ENCODE measurements at regions of chr10 and their contacts with region 1.

Region 1: DNA sequence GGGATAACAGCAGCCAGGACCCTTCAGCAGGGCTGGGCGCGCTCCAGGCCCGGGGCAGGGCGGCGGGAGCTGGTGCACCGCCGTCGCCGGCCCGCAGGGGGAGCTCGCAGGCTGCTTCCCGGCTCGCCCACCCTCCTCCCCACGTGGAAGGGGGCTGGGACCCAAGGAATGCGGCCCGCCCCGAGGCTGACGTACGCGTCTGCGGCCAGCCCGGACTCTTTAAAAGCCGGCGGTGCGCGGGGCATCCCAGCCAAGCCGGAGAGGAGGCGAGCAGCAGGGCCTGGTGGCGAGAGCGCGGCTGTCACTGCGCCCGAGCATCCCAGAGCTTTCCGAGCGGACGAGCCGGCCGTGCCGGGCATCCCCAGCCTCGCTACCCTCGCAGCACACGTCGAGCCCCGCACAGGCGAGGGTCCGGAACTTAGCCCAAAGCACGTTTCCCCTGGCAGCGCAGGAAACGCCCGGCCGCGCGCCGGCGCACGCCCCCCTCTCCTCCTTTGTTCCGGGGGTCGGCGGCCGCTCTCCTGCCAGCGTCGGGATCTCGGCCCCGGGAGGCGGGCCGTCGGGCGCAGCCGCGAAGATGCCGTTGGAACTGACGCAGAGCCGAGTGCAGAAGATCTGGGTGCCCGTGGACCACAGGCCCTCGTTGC is at the start of gene PFKFB3:
- DNase-seq: peak; percentile 99
- total RNA-seq, gene PFKFB3: 33.2 to 43.1 TPM

Region 2: DNA sequence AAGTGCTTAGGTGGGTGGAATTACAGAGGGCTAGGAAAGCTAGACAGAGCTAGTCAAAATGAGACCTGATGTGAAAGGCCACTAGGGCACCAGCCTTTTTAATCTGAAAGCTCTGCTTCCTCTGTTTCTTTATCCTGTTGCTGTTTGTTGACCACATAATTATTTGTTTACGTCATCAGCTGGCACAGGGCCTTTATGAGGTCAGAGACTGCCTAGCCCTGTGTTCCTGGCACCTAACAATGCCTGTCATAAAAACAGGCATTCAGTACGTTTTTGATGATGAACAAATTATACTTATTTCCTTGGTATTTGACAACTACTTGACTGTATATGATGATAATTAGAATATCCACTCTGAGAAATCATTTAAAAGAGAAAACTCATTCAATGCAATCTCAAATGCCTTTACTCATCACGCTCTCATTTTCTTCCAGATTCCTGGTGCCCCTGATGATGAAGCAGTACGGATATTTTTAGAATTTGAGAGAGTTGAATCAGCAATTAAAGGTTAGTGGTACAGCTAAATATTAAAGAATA is 87.9 kb before region 1 on chr10:
- intact Hi-C with region 1: loop called in 1 of 2 experiments (anchors 10 kb)
- DNase-seq: no peak

Region 3: DNA sequence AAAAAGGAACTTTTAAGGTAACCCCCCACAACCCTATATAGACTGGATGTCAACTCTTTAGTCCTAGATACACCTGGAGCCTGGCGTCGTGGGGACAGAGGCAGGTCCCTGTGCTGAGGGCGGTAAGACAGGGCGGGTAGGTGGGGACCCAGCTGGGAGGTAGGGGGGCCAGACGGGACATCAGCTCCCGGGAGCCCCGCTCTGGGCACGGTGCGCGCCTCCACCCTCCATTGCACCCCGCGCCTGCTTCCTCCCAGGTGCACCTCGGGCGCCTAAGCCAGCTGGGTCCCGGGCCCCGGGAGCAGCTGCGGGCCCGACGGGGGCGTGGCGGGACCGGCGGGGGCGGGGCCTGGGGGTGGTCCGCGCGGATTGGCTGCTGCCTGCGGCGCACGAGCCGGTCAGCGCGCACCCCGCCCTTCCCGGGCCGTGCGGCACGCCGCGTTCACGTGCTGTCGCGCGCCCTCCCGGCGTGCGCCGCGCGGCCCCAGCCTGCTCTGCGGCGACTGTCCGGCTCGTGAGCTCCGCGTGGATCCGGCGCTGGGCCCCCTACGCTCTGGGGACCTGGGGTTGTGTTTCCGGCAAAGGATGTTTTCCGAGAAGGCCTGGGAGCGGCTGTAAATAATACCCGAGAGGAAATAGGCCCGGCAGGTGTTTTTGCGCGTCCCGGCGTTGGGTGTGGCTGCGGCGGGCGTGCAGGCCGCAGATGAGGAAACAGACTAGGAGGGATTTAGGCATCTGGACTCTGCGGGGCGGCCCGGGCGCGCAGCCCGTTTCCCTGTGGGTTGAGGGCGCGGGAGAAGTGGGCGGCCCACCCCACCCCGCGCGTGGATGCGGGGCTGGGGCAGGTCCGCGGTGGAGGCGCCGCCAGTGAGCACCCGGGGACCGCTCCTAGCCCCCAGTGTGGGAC is 39.2 kb before region 1 on chr10:
- intact Hi-C with region 1: loop called in 1 of 2 experiments (anchors 5 kb)
- DNase-seq: peak; percentile 97

Measured in posterior vena cava (tissue), 2 donors.